Natural killer cell (primary cell): ENCODE measurements at regions of chr10 and their contacts with region 1.

Region 1: GRCh38 chr10:132307823-132308587 is at the start of gene STK32C:
- DNase-seq: peak; percentile 76 to 95
- ATAC-seq: peak; percentile 89 to 94 (median 91)
- H3K4me3 ChIP-seq: peak within 1 kb of the TSS; percentile 61
- H3K4me3 Mint-ChIP-seq: peak within 1 kb of the TSS; percentile 94
- H3K27ac ChIP-seq: peak within 1 kb of the TSS; percentile 21
- H3K27ac Mint-ChIP-seq: peak within 1 kb of the TSS; percentile 46 to 69
- H3K4me1 ChIP-seq: peaks cover 14% of the 10 kb centered on the region
- H3K4me1 Mint-ChIP-seq: peaks cover 8 to 22% of the 10 kb centered on the region in 2 donors
- H3K27me3 ChIP-seq: no peaks in the 10 kb centered on the region
- H3K27me3 Mint-ChIP-seq: no peaks in the 10 kb centered on the region
- CTCF ChIP-seq: no peak
- total RNA-seq, gene STK32C: 12.7 to 22.1 (median 17.9) TPM

Region 2: GRCh38 chr10:132331526-132332432 is 23.8 kb after region 1 on chr10 and contains the start of gene LRRC27:
- intact Hi-C with region 1: loop called (anchors 1 kb)
- DNase-seq: peak; percentile 100
- ATAC-seq: peak; percentile 73 to 89 (median 73)
- H3K4me3 ChIP-seq: peak within 1 kb of the TSS; percentile 82
- H3K4me3 Mint-ChIP-seq: peak within 1 kb of the TSS; percentile 91
- H3K27ac ChIP-seq: peak within 1 kb of the TSS; percentile 87
- H3K27ac Mint-ChIP-seq: peak within 1 kb of the TSS; percentile 73 to 96
- H3K4me1 ChIP-seq: peaks cover 54% of the 10 kb centered on the region
- H3K4me1 Mint-ChIP-seq: peaks cover 65 to 81% of the 10 kb centered on the region in 2 donors
- H3K27me3 ChIP-seq: no peaks in the 10 kb centered on the region
- H3K27me3 Mint-ChIP-seq: peaks cover 0 to 2% of the 10 kb centered on the region in 2 donors
- CTCF ChIP-seq: no peak
- total RNA-seq, gene LRRC27: 8.1 to 22.5 (median 9.9) TPM

Region 3: GRCh38 chr10:132746801-132747625 is 439.0 kb after region 1 on chr10:
- intact Hi-C with region 1: no loop called
- DNase-seq: no peak
- ATAC-seq: no peak
- H3K4me3 ChIP-seq: no peak overlapping the region
- H3K4me3 Mint-ChIP-seq: no peak overlapping the region
- H3K27ac ChIP-seq: no peak overlapping the region
- H3K27ac Mint-ChIP-seq: no peak overlapping the region
- H3K4me1 ChIP-seq: no peaks in the 10 kb centered on the region
- H3K4me1 Mint-ChIP-seq: no peaks in the 10 kb centered on the region
- H3K27me3 ChIP-seq: no peaks in the 10 kb centered on the region
- H3K27me3 Mint-ChIP-seq: no peaks in the 10 kb centered on the region
- CTCF ChIP-seq: no peak